ENCODE measurements at regions of chr14 and their contacts with region 1.

Region 1: DNA sequence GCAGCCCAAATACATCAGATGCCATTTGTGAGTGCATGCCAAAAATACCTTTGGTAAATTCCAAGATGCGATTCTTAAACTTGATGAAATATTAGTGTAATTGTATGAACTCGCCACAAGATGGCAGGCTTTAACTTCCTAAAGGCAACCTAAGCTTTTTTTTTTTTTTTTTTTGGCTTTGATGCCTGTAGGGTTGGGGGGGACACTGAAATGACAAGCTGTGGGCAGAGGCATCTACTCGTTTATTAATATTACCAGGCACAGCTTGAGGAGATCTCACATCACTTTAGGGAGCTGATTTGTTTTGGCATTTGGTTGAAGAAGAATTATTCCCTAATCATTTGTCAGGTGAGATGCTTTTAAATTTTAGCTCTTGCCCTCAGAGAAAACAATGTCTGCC is 126.7 kb upstream of the CCDC196 start:
- DNase-seq: peak; percentile 16 to 64
- H3K4me3 ChIP-seq: no peak overlapping the region
- H3K27ac ChIP-seq: no peak overlapping the region
- H3K4me1 ChIP-seq: no peaks in the 10 kb centered on the region
- H3K27me3 ChIP-seq: no peaks in the 10 kb centered on the region
- CTCF ChIP-seq: peak; percentile 92

Region 2: DNA sequence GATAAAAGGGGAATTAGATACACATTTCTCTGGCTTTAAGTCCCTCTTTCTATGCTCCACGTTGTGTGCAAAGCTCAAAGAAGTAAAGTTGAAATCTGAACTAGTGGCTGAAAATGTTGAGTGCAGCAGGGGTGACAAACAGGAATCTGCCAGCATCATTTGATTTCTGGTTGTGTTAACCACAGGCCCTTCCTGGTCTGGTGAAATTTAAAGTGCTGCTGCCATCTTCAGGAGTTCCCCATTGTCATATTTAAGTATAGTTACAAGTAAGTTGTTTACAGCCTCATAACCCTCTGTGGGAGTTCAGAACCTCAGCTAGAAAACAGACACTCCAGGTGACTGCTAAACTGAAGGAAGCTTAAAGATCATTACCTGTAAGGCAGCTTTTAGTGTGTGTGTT is 35.8 kb after region 1 on chr14:
- CTCF ChIA-PET with region 1: interaction called, 12 read pairs
- POLR2A ChIA-PET with region 1: interaction called, 4 read pairs
- intact Hi-C with region 1: no loop called
- DNase-seq: peak; percentile 10 to 56
- H3K4me3 ChIP-seq: no peak overlapping the region
- H3K27ac ChIP-seq: no peak overlapping the region
- H3K4me1 ChIP-seq: no peaks in the 10 kb centered on the region
- H3K27me3 ChIP-seq: 0 out of 2 replicates have a peak, but pooled peaks cover 4% of the 10 kb centered on the region
- CTCF ChIP-seq: 0 out of 2 replicates have a peak, but pooled peaks have one; percentile 23

Region 3: GRCh38 chr14:66495218-66496098 is 136.0 kb after region 1 on chr14:
- CTCF ChIA-PET with region 1: interaction called, 7 read pairs
- POLR2A ChIA-PET with region 1: no interaction called
- intact Hi-C with region 1: loop called (anchors 10 kb)
- DNase-seq: peak; percentile 33 to 62
- H3K4me3 ChIP-seq: no peak overlapping the region
- H3K27ac ChIP-seq: no peak overlapping the region
- H3K4me1 ChIP-seq: no peaks in the 10 kb centered on the region
- H3K27me3 ChIP-seq: no peaks in the 10 kb centered on the region
- CTCF ChIP-seq: peak; percentile 85

Region 4: GRCh38 chr14:66920196-66920595 is 560.7 kb after region 1 on chr14:
- CTCF ChIA-PET with region 1: interaction called, 15 read pairs
- POLR2A ChIA-PET with region 1: no interaction called
- intact Hi-C with region 1: no loop called
- DNase-seq: no peak
- H3K4me3 ChIP-seq: no peak overlapping the region
- H3K27ac ChIP-seq: no peak overlapping the region
- H3K4me1 ChIP-seq: no peaks in the 10 kb centered on the region
- H3K27me3 ChIP-seq: no peaks in the 10 kb centered on the region
- CTCF ChIP-seq: no peak

Region 5: DNA sequence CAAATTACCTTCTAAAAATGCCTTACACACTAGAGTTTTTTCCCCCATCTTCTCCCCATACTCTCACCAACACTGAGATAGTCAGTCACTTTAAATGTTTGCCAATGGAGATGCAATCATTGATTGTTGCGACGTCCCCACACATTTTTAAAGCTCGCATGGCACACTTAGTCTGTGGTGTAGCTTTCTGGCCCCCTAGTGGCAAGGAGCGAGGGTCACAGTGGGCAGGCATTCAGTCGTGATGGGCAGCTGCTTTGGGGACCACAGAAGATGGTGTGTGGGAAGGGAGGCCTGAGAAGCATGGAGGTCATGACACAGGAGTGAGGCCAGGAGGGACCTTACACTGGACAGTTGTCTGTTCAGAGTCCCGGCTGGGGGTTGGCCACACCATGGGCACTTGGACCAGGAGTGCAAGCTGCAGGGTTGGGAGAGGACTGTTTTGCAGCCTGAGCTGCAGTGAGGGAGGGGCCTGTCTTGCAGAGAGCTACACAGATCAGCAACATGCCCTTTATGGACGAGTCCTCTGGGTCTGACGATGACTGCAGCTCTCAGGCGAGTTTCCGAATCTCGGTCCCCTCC is 1211.9 kb after region 1 on chr14:
- CTCF ChIA-PET with region 1: no interaction called
- POLR2A ChIA-PET with region 1: interaction called, 22 read pairs
- intact Hi-C with region 1: no loop called
- DNase-seq: peak; percentile 40 to 60
- H3K4me3 ChIP-seq: no peak overlapping the region
- H3K27ac ChIP-seq: no peak overlapping the region
- H3K4me1 ChIP-seq: peaks cover 8% of the 10 kb centered on the region; the same call in 1 of the 2 replicates
- H3K27me3 ChIP-seq: no peaks in the 10 kb centered on the region
- CTCF ChIP-seq: peak; percentile 97

Measured in PC-9 (cell line).